Cardiac septum (tissue), 1 donor: ENCODE measurements at regions of chr1 and their contacts with region 1.

Region 1: GRCh38 chr1:151024540-151025146 is 11.7 kb upstream of the BNIPL start:
- DNase-seq: peak; percentile 91

Region 2: GRCh38 chr1:150944856-150945255 is 79.8 kb before region 1 on chr1:
- intact Hi-C with region 1: no loop called
- DNase-seq: no peak

Region 3: GRCh38 chr1:151047925-151048645 is 23.4 kb after region 1 on chr1:
- intact Hi-C with region 1: loop called (anchors 2 kb)
- DNase-seq: peak; percentile 84

Region 4: DNA sequence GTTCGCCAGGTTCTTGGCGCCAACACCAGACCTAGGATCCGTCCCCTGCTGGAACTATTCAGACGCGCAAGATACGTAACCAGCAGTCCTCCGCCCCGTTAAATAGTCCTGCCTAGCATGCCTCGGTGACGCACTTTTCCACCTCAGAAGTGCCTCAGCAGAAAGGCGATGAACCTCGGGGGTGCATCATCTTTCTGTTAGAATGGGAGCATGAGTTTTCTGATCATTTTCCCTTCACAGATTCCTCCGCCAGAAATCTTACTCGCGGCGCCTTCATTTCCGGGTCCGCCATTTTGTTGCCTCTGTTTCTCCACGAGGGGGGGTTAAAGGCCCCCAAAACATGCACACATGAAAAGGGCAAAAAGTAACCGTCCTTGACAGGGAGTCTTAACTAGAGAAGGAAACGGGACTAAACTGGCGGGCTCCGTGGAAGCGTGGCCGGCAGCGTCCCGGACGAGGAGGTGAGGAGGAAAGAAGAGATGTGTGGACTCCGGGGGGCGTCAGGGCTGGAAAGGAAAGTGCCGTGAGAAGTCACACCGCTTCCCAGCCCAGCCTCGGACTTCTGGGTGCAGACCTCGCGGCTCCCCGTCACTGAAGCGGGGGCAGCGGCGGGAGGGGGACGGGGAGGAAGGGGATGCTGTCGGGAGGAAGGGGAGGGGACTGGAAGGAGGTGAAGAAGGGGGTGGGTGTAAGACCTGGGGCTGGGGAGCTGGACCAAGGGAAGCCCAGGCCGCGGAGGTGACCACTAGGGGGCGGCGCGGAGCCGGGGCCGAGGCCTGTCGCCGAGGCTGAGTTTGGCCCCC is 46.0 kb after region 1 on chr1 and contains the start of gene GABPB2:
- intact Hi-C with region 1: loop called (anchors 2 kb)
- DNase-seq: peak; percentile 96
- total RNA-seq, gene GABPB2: 11.7 TPM

Region 5: GRCh38 chr1:151146412-151147140 is 121.9 kb after region 1 on chr1 and contains the start of gene SEMA6C:
- intact Hi-C with region 1: loop called (anchors 5 kb)
- DNase-seq: peak; percentile 100
- total RNA-seq, gene SEMA6C: 46.5 TPM